ENCODE measurements at regions of chr6 and their contacts with region 1.

Region 1: GRCh38 chr6:34236131-34236996 is at the start of gene HMGA1:
- DNase-seq: peak; percentile 88
- H3K4me3 ChIP-seq: peak within 1 kb of the TSS; percentile 94 to 98 (median 97)
- H3K27ac ChIP-seq: peak within 1 kb of the TSS; percentile 91
- H3K4me1 ChIP-seq: peaks cover 40% of the 10 kb centered on the region
- H3K27me3 ChIP-seq: no peaks in the 10 kb centered on the region
- CTCF ChIP-seq: no peak
- POLR2A ChIP-seq: peak; percentile 98
- total RNA-seq, gene HMGA1: 1,031 and 1,108 TPM in 2 replicates

Region 2: GRCh38 chr6:33781114-33781975 is 455.0 kb before region 1 on chr6:
- CTCF ChIA-PET with region 1: no interaction called
- POLR2A ChIA-PET with region 1: no interaction called
- dilution Hi-C with region 1: no loop called
- intact Hi-C with region 1: loop called (anchors 5 kb)
- DNase-seq: peak; percentile 92
- H3K4me3 ChIP-seq: peak overlapping the region in 1 of 3 experiments; percentile 13
- H3K27ac ChIP-seq: peak overlapping the region; percentile 96
- H3K4me1 ChIP-seq: peaks cover 56% of the 10 kb centered on the region
- H3K27me3 ChIP-seq: no peaks in the 10 kb centered on the region
- CTCF ChIP-seq: no peak
- POLR2A ChIP-seq: peak; percentile 71

Region 3: GRCh38 chr6:34161857-34162515 is 74.4 kb before region 1 on chr6:
- CTCF ChIA-PET with region 1: interaction called, 11 read pairs
- POLR2A ChIA-PET with region 1: no interaction called
- dilution Hi-C with region 1: no loop called
- intact Hi-C with region 1: no loop called
- DNase-seq: no peak
- H3K4me3 ChIP-seq: no peak overlapping the region
- H3K27ac ChIP-seq: no peak overlapping the region
- H3K4me1 ChIP-seq: no peaks in the 10 kb centered on the region
- H3K27me3 ChIP-seq: no peaks in the 10 kb centered on the region
- CTCF ChIP-seq: no peak
- POLR2A ChIP-seq: no peak

Region 4: DNA sequence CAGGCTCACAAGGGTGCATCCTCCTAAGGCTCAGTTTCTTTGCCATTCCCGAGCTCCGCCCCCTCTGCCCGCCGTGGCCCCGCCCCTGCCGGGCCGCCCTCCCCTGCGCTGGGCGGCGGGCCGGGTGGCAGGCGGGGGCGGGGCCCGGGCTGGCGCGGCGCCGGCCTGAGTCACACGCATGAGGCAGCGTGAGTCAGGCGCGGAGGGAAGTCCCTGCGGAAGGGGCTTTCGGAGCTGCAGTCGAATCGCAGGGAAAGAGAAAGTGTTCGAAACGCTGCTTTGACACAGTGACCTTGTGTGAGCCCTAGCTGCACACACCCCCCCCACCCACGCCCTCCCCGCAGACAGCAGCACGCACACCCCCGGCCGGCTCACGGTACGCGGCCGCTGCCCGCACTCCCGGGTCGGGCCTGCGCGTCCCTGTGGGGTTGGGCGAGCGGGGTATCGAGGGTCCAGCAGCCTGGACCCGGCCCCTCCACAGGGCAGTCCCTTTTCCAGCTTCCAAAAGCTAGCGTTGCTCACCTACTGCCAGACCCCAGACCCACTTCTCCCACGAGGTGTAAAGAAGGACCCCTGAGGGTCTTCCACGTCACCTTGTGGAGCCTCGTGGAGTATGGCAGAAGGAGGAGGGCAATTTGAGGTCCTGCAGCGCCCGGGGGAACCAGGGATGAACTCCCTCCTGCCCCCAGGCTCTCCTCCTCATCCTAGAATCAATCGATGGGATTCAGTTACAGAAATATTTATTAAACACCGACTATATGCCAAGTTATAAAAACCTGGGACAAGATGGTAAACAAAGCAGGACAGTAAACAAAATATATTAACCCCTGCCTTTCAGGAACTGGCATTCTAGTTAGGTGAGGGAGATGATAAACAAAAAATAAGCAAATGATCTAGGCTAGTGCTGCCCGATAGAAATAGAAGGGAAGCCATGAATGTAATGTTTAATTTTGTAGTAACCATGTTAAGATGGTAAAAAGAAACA is 12.1 kb before region 1 on chr6:
- CTCF ChIA-PET with region 1: interaction called, 8 read pairs
- POLR2A ChIA-PET with region 1: interaction called, 35 read pairs
- dilution Hi-C with region 1: no loop called
- intact Hi-C with region 1: loop called (anchors 1 kb)
- DNase-seq: peak; percentile 95
- H3K4me3 ChIP-seq: peak overlapping the region; percentile 37 to 69 (median 41)
- H3K27ac ChIP-seq: peak overlapping the region; percentile 99
- H3K4me1 ChIP-seq: peaks cover 16% of the 10 kb centered on the region
- H3K27me3 ChIP-seq: no peaks in the 10 kb centered on the region
- CTCF ChIP-seq: no peak
- POLR2A ChIP-seq: no peak